Naive thymus-derived CD4-positive, alpha-beta T cell (primary cell): ENCODE measurements at regions of chr4 and their contacts with region 1.

Region 1: DNA sequence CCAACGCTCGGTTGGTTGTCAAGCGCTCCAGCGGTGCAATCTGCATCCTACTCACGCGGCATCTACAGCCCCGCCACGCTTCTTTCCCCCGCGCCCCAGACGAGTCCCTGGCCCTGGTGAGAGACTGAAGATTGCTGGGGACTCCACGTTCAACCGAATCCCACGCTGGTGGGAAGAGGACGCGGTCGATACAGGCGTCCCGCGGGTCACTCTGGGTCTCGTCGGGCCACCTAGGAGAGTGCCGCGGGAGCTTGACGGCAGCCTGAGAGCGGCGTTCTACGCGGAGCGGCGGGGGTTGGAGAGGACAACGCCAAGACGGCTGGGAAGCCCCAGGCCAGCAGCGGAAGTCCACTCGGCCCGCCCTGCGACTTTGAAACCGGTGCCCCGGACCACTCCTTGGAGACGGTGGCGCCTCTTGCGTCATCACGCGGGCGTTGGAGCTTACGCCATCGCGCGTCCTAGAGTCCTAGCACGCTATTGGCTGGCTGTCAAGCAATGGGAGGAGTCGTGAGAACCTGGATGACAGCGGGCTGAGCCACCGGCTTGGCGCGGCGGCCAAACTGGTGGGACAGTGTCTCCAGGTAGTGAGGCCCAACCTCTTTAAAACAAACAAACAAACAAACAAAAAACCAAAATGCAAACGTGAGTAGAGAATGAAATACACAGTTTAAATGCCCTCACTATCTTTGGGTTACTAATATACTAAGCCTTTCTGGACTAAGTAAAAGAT is at the start of gene SCLT1:
- DNase-seq: peak; percentile 89 to 97 (median 94)
- ATAC-seq: peak; percentile 96
- H3K4me3 ChIP-seq: peak within 1 kb of the TSS; percentile 83
- H3K4me3 Mint-ChIP-seq: peak within 1 kb of the TSS in 5 of 10 donors; percentile 33 to 65 (median 50)
- H3K27ac ChIP-seq: peak within 1 kb of the TSS; percentile 95
- H3K27ac Mint-ChIP-seq: peak within 1 kb of the TSS in 4 of 9 donors; percentile 33 to 76 (median 50)
- H3K4me1 ChIP-seq: peaks cover 26 to 30% of the 10 kb centered on the region in 2 donors
- H3K4me1 Mint-ChIP-seq: peaks cover 16 to 57% (median 43%) of the 10 kb centered on the region in 7 donors
- H3K27me3 ChIP-seq: no peaks in the 10 kb centered on the region
- H3K27me3 Mint-ChIP-seq: no peaks in the 10 kb centered on the region
- total RNA-seq, gene SCLT1: 21.4 to 36.4 (median 26.9) TPM

Region 2: GRCh38 chr4:127880764-127881562 is 1212.4 kb before region 1 on chr4 and contains the start of gene PLK4:
- CTCF ChIA-PET with region 1: no interaction called
- POLR2A ChIA-PET with region 1: no interaction called
- intact Hi-C with region 1: loop called (anchors 1 to 2 kb)
- DNase-seq: peak; percentile 91 to 96 (median 95)
- ATAC-seq: peak; percentile 97
- H3K4me3 ChIP-seq: peak within 1 kb of the TSS; percentile 93
- H3K4me3 Mint-ChIP-seq: peak within 1 kb of the TSS; percentile 90 to 99 (median 97)
- H3K27ac ChIP-seq: peak within 1 kb of the TSS; percentile 75
- H3K27ac Mint-ChIP-seq: peak within 1 kb of the TSS; percentile 95 to 99 (median 99)
- H3K4me1 ChIP-seq: peaks cover 4 to 10% of the 10 kb centered on the region in 2 donors
- H3K4me1 Mint-ChIP-seq: peaks cover 4 to 37% (median 28%) of the 10 kb centered on the region in 7 donors
- H3K27me3 ChIP-seq: no peaks in the 10 kb centered on the region
- H3K27me3 Mint-ChIP-seq: peaks cover 0 to 3% (median 0%) of the 10 kb centered on the region in 5 donors
- total RNA-seq, gene PLK4: 3.4 to 34.7 (median 3.9) TPM

Region 3: GRCh38 chr4:128060699-128061565 is 1032.4 kb before region 1 on chr4 and contains the start of gene LARP1B:
- CTCF ChIA-PET with region 1: no interaction called
- POLR2A ChIA-PET with region 1: no interaction called
- intact Hi-C with region 1: loop called (anchors 1 to 2 kb)
- DNase-seq: peak; percentile 83 to 96 (median 89)
- ATAC-seq: peak; percentile 93
- H3K4me3 ChIP-seq: peak within 1 kb of the TSS; percentile 74
- H3K4me3 Mint-ChIP-seq: peak within 1 kb of the TSS; percentile 82 to 91 (median 88)
- H3K27ac ChIP-seq: peak within 1 kb of the TSS; percentile 90
- H3K27ac Mint-ChIP-seq: peak within 1 kb of the TSS; percentile 87 to 94 (median 91)
- H3K4me1 ChIP-seq: peaks cover 0 to 5% of the 10 kb centered on the region in 2 donors
- H3K4me1 Mint-ChIP-seq: peaks cover 0 to 16% (median 10%) of the 10 kb centered on the region in 7 donors
- H3K27me3 ChIP-seq: no peaks in the 10 kb centered on the region
- H3K27me3 Mint-ChIP-seq: peaks cover 0 to 2% (median 0%) of the 10 kb centered on the region in 5 donors
- total RNA-seq, gene LARP1B: 9.5 to 18.2 (median 13.7) TPM

Region 4: DNA sequence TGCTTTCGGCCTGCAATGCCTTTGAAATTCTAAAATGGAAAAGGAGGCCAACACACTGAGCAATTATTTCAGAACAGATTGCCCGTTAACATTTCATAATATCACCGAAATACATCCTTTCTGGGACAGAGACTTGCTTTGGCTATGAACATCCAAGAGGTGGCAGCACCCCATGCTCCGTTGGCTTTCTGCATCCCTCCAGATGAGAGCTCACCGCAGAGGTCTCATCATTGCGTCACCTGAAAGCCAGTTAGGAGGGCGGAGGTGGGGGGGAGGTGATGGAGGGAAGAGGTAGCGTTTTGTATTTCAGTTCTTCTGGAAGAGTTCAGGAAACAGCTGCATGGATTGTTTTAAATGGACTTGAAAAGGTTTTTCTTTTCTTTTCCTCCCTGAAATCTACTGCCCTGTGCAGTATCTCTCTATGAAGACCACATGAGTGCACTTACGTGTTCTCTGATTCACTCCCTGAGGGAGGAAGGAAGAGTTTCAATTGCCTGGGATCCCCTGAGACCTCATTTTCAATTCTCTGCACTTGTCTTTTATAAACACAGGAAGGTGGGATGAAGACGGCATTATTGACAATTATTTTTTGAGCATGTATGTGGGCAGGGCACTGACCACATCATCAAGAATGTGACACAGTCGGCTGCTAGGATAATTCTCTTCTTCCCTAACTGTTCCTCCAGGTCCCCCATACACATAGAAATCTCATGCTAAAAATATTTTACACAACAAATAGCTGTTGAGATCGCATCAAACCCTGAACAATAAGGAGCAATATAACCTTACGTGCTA is 638.9 kb before region 1 on chr4:
- CTCF ChIA-PET with region 1: no interaction called
- POLR2A ChIA-PET with region 1: no interaction called
- intact Hi-C with region 1: loop called in 1 of 2 experiments (anchors 10 kb)
- DNase-seq: peak; percentile 16 to 68 (median 49)
- ATAC-seq: peak; percentile 92
- H3K4me3 ChIP-seq: no peak overlapping the region
- H3K4me3 Mint-ChIP-seq: no peak overlapping the region
- H3K27ac ChIP-seq: no peak overlapping the region
- H3K27ac Mint-ChIP-seq: peak overlapping the region in 1 of 9 donors; percentile 47
- H3K4me1 ChIP-seq: no peaks in the 10 kb centered on the region
- H3K4me1 Mint-ChIP-seq: peaks cover 0 to 11% (median 0%) of the 10 kb centered on the region in 7 donors
- H3K27me3 ChIP-seq: no peaks in the 10 kb centered on the region
- H3K27me3 Mint-ChIP-seq: no peaks in the 10 kb centered on the region

Region 5: GRCh38 chr4:128863312-128864075 is 229.9 kb before region 1 on chr4:
- CTCF ChIA-PET with region 1: no interaction called
- POLR2A ChIA-PET with region 1: no interaction called
- intact Hi-C with region 1: loop called (anchors 5 kb)
- DNase-seq: peak; percentile 37 to 74 (median 60)
- ATAC-seq: peak; percentile 73
- H3K4me3 ChIP-seq: no peak overlapping the region
- H3K4me3 Mint-ChIP-seq: peak overlapping the region in 5 of 10 donors; percentile 2 to 55 (median 17)
- H3K27ac ChIP-seq: peak overlapping the region; percentile 58
- H3K27ac Mint-ChIP-seq: peak overlapping the region in 8 of 9 donors; percentile 59 to 91 (median 82)
- H3K4me1 ChIP-seq: peaks cover 21 to 22% of the 10 kb centered on the region in 2 donors
- H3K4me1 Mint-ChIP-seq: peaks cover 20 to 49% (median 45%) of the 10 kb centered on the region in 7 donors
- H3K27me3 ChIP-seq: no peaks in the 10 kb centered on the region
- H3K27me3 Mint-ChIP-seq: no peaks in the 10 kb centered on the region

Region 6: DNA sequence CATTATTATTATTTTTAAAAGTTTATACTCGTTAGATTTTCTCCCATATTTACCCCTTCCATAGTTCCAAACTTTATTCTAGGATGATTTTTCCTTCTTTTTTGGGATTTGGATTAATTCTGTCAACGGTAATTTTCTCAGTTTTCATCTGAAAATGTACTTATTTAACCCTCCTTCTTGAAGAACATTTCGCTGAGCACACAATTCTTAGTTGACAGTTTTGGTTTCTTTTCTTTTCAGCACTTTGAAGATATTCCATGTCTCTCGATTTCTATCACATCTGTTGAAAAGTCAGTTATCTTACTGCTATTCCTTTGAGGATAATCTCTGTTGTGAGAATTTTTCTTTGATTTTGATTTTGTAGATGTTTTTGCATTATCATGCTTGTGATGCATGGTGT is 85.3 kb before region 1 on chr4:
- CTCF ChIA-PET with region 1: no interaction called
- POLR2A ChIA-PET with region 1: no interaction called
- intact Hi-C with region 1: loop called in 1 of 2 experiments (anchors 5 kb)
- DNase-seq: no peak
- ATAC-seq: no peak
- H3K4me3 ChIP-seq: no peak overlapping the region
- H3K4me3 Mint-ChIP-seq: no peak overlapping the region
- H3K27ac ChIP-seq: no peak overlapping the region
- H3K27ac Mint-ChIP-seq: no peak overlapping the region
- H3K4me1 ChIP-seq: no peaks in the 10 kb centered on the region
- H3K4me1 Mint-ChIP-seq: no peaks in the 10 kb centered on the region
- H3K27me3 ChIP-seq: no peaks in the 10 kb centered on the region
- H3K27me3 Mint-ChIP-seq: no peaks in the 10 kb centered on the region